Activated CD4-positive, alpha-beta T cell treated with anti-CD3 and anti-CD28 coated beads, Interleukin-2, amount 10 ng/mL, durations not matched to agents 24 days and 14 days (primary cell): ENCODE measurements at regions of chr18 and their contacts with region 1.

Region 1: DNA sequence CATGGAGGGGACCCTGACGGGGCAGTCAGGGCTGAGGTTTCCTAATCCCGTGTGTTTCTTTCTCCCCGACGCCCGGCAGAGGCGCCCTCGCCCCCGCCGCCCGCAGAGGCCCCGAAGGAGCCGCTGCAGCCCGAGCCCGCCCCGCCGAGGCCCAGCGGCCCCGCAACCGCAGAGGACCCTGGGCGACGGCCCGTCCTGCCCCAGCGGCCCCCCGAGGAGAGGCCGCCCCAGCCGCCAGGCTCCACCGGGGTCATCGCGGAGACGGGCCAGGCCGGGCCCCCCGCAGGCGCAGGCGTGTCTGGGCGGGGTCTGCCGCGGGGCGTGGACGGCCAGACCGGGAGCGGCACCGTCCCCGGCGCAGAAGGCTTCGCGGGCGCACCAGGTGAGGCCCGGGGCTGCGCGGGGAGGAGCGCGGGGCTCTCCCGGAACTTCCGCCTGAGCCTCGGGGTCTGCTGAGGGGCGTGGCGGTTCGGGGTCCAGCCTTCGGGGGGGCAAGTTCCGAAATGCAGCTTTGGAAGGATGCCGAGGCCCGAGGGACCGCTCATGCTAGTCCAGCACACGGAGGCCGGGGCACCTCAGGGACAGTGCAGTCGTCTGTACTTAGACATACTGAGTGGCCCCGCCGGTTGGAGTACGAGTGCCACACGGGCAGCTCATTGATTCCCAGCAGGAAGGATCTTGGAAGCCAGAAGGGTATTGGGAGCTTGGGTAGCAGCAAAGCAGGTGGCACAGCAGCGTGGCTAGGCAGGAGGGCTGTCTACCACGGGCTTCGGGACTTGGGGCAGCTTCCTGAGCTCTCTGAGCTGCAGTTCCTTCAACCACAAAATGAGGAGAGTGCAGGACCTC is 60.1 kb downstream of the EMILIN2 start:
- DNase-seq: peak; percentile 90
- H3K4me3 Mint-ChIP-seq: peak overlapping the region; percentile 89
- H3K27ac Mint-ChIP-seq: peak overlapping the region; percentile 82
- H3K4me1 Mint-ChIP-seq: peaks cover 21% of the 10 kb centered on the region
- H3K27me3 Mint-ChIP-seq: no peaks in the 10 kb centered on the region

Region 2: GRCh38 chr18:2547477-2548087 is 359.3 kb before region 1 on chr18:
- intact Hi-C with region 1: loop called (anchors 5 kb)
- DNase-seq: peak; percentile 65
- H3K4me3 Mint-ChIP-seq: no peak overlapping the region
- H3K27ac Mint-ChIP-seq: no peak overlapping the region
- H3K4me1 Mint-ChIP-seq: no peaks in the 10 kb centered on the region
- H3K27me3 Mint-ChIP-seq: no peaks in the 10 kb centered on the region

Region 3: GRCh38 chr18:2692508-2692907 is 214.4 kb before region 1 on chr18:
- intact Hi-C with region 1: loop called (anchors 10 kb)
- DNase-seq: no peak
- H3K4me3 Mint-ChIP-seq: no peak overlapping the region
- H3K27ac Mint-ChIP-seq: peak overlapping the region; percentile 30
- H3K4me1 Mint-ChIP-seq: peaks cover 20% of the 10 kb centered on the region
- H3K27me3 Mint-ChIP-seq: no peaks in the 10 kb centered on the region

Region 4: GRCh38 chr18:2774669-2775068 is 132.3 kb before region 1 on chr18:
- intact Hi-C with region 1: loop called (anchors 5 kb)
- DNase-seq: no peak
- H3K4me3 Mint-ChIP-seq: no peak overlapping the region
- H3K27ac Mint-ChIP-seq: no peak overlapping the region
- H3K4me1 Mint-ChIP-seq: peaks cover 6% of the 10 kb centered on the region
- H3K27me3 Mint-ChIP-seq: no peaks in the 10 kb centered on the region

Region 5: DNA sequence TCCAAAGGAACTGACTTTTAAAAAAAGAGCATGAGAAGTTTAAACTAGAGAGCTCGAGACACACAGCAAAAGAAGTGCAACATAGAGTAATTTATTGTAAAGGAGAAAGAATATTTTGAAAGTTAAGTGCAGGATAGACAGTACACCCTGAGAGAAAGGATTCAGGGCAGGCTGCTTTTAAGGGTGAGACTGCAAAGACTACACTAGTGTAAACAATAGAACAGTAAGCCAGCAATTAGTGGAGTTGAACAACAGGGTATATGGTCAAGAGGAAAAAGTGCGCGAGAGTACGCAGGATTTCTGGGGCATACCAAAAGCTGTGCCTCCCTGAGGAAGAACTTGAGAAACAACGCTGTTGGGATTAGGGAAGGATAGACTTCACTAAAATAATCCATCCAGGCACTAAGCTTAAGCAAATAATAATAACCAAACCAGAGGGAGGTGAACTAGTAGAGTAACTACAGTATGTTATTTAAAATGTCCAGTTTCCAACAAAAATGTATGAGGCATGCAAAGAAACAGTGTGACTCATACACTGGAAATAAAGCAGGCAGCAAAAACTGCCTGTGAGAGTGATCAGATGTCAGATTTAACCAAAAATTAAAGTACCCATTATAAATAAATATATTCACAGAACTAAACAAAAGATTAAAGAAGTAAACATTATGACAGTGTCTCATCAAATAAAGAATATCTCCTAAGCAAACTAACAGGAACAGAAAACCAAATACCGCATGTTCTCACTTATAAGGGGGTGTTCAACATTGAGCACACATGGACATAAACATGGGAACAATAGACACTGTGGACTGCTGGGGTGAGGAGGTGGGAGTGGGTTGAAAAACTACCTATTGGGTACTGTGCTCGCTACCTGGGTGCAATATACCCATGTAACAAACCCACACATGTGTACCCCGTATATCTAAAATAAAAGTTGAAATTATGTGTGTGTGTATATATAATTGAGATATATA is 100.7 kb before region 1 on chr18:
- intact Hi-C with region 1: loop called (anchors 5 kb)
- DNase-seq: peak; percentile 44
- H3K4me3 Mint-ChIP-seq: no peak overlapping the region
- H3K27ac Mint-ChIP-seq: no peak overlapping the region
- H3K4me1 Mint-ChIP-seq: peaks cover 3% of the 10 kb centered on the region
- H3K27me3 Mint-ChIP-seq: peaks cover under 1% of the 10 kb centered on the region

Region 6: GRCh38 chr18:2846636-2847364 is 60.1 kb before region 1 on chr18 and contains the start of gene EMILIN2:
- intact Hi-C with region 1: loop called (anchors 1 kb)
- DNase-seq: peak; percentile 80
- H3K4me3 Mint-ChIP-seq: peak within 1 kb of the TSS; percentile 88
- H3K27ac Mint-ChIP-seq: peak within 1 kb of the TSS; percentile 89
- H3K4me1 Mint-ChIP-seq: peaks cover 36% of the 10 kb centered on the region
- H3K27me3 Mint-ChIP-seq: peaks cover 49% of the 10 kb centered on the region
- total RNA-seq, gene EMILIN2: 32.4 and 35.5 TPM in 2 replicates